Caco-2 (cell line): ENCODE measurements at regions of chr17 and their contacts with region 1.

Region 1: DNA sequence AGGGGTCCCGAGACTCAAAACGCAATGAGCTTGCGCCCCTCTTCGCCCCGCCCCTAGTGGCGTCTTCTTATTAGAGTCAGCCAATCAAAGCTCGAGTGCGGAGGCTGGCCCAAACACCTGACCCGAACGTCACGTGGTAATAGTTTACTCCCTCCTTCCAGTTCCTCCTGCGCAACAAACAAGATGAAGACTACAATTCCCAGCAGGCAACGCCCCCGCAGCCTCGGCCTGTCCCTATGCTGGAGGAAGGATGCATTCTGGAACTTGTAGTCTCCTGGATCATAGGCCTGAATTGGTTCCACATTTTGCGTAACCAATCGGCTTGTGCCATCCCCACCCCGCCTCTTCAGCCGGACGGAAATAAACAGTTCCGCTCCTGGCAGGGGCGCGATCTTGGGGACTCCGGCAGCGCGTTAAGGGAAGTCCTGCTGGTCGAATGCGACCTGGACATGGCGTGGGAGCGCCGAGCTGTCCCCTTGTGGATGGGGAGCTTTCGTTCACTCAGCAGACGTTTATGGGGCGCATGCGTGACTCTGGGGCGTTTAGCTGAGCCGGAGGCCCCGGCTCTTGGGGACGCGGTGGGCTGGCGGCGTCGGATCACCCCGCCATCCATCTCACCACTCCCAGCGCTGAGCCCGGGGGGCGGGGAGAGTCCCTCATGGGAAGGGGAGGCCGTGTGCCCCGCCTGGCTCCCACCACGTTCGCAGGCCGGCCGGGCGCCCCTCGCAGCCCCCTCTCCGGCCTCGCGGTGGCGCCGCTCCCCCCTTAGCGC is at the start of gene WBP2:
- DNase-seq: peak; percentile 98 to 99
- H3K4me3 ChIP-seq: peak within 1 kb of the TSS; percentile 85
- H3K4me3 Mint-ChIP-seq: no peak within 1 kb of the TSS
- H3K27ac Mint-ChIP-seq: no peak within 1 kb of the TSS
- H3K4me1 ChIP-seq: peaks cover 6% of the 10 kb centered on the region
- H3K4me1 Mint-ChIP-seq: peaks cover 12% of the 10 kb centered on the region
- H3K27me3 ChIP-seq: no peaks in the 10 kb centered on the region
- H3K27me3 Mint-ChIP-seq: no peaks in the 10 kb centered on the region
- CTCF ChIP-seq: peak; percentile 11 to 20
- total RNA-seq, gene WBP2: 66.6 and 72.3 TPM in 2 replicates

Region 2: DNA sequence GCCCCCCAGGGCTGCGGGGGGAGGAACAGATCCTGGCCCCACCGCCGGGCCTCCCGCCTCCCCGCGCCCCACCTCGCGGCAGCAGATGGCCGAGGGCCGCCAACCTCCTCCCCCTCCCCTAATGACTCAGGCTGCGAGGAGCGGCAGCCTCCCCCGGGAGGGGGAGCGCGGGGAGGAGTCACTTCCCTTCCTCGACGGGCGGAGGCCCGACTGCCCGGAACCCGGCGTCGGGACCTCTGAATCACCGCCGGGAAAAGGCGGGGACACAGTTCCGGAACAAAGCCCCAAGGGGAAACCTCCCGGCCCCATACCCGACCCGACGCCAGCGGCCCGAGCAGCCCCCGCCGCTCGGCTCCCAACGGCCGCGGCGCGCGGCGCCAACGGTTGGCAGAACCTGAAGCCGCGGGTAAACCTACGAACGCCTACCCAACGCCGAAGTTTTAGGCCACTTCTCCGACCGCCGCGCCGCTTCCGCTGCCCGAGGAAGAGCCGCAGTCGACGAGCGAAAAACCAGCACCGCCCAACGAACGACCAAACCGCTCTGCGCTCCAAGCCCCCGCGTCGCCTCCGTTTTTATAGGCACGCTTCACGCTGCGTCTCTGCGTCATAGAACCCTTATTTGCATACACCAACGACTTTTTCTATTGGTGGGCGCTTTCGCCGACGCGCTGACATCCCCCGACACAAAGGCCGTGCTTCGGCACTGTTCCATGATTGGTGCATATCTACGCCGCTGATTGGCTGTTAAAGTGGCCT is 76.1 kb before region 1 on chr17:
- CTCF ChIA-PET with region 1: interaction called, 8 read pairs
- POLR2A ChIA-PET with region 1: interaction called, 37 read pairs
- intact Hi-C with region 1: loop called (anchors 1 kb)
- DNase-seq: peak; percentile 97 to 99
- H3K4me3 ChIP-seq: peak overlapping the region; percentile 85
- H3K4me3 Mint-ChIP-seq: peak overlapping the region; percentile 100
- H3K27ac Mint-ChIP-seq: peak overlapping the region; percentile 100
- H3K4me1 ChIP-seq: peaks cover 21% of the 10 kb centered on the region
- H3K4me1 Mint-ChIP-seq: peaks cover 28% of the 10 kb centered on the region
- H3K27me3 ChIP-seq: no peaks in the 10 kb centered on the region
- H3K27me3 Mint-ChIP-seq: peaks cover 4% of the 10 kb centered on the region
- CTCF ChIP-seq: no peak

Region 3: DNA sequence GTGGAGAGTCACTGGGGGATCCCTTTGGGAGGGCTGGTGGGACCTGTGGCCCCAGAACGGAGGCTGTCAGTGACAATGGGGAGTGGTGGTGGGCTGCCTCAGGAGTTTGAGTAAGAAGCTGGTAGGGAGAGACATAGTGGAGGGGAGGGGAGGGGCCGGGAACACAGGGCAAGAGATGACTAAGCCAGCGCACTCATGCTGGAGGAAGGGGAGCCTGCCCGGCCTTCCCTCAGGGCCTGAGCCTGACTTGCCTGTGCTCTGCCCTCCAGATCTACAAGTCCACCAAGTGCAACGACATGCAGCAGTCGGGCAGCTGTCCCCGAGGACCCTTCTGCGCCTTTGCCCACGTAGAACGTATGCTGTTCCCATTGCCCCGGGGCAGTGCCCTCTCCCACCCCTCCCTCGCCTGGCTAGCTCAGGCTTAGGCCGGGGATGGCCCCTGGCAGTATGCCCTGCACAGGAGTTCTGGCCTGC is 40.6 kb before region 1 on chr17:
- CTCF ChIA-PET with region 1: no interaction called
- POLR2A ChIA-PET with region 1: interaction called, 10 read pairs
- intact Hi-C with region 1: no loop called
- DNase-seq: no peak
- H3K4me3 ChIP-seq: no peak overlapping the region
- H3K4me3 Mint-ChIP-seq: no peak overlapping the region
- H3K27ac Mint-ChIP-seq: no peak overlapping the region
- H3K4me1 ChIP-seq: no peaks in the 10 kb centered on the region
- H3K4me1 Mint-ChIP-seq: no peaks in the 10 kb centered on the region
- H3K27me3 ChIP-seq: no peaks in the 10 kb centered on the region
- H3K27me3 Mint-ChIP-seq: no peaks in the 10 kb centered on the region
- CTCF ChIP-seq: no peak

Region 4: DNA sequence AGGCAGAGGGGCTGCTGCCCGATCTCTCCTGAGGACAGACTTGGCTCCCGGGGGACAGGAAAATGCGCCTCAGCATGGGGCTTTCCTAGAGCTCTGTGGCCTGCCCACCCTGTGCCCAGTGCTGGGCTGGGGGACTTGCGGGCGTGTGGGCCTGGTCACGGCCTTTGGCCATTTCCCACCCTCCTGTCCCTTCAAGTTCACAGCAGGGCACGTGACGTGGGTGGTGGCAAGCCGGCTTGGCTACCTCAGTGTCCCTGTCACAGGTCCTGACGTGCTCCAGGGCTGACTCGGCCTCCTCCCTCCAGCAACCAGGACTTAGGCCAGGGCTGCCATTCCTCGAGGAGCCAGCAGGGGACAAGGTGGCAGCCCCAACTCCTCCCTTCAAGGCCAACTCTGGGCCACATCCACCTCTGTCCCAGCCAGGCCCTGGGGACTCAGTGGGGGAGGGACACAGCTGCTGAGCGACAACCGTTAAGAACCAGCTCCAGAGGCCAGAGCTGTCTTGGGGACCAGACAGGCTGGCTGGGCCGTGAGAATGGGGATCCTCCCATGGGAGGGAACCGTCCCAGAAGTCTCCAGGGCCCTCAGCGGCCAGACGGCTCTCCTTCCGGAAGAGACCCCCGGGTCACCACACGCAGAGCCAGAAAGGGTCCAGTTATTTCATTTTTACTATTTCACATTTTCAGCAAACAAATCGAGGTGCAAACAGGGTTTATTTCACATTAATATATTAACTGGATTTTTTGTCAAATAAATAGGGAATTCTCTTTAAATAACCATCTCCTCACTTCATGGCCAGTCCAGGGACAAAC is 10.2 kb before region 1 on chr17:
- CTCF ChIA-PET with region 1: interaction called, 34 read pairs
- POLR2A ChIA-PET with region 1: interaction called, 30 read pairs
- intact Hi-C with region 1: loop called (anchors 1 kb)
- DNase-seq: peak; percentile 85 to 89
- H3K4me3 ChIP-seq: no peak overlapping the region
- H3K4me3 Mint-ChIP-seq: peak overlapping the region; percentile 54
- H3K27ac Mint-ChIP-seq: peak overlapping the region; percentile 93
- H3K4me1 ChIP-seq: peaks cover 41% of the 10 kb centered on the region
- H3K4me1 Mint-ChIP-seq: peaks cover 26% of the 10 kb centered on the region
- H3K27me3 ChIP-seq: no peaks in the 10 kb centered on the region
- H3K27me3 Mint-ChIP-seq: no peaks in the 10 kb centered on the region
- CTCF ChIP-seq: peak; percentile 72 to 86

Region 5: DNA sequence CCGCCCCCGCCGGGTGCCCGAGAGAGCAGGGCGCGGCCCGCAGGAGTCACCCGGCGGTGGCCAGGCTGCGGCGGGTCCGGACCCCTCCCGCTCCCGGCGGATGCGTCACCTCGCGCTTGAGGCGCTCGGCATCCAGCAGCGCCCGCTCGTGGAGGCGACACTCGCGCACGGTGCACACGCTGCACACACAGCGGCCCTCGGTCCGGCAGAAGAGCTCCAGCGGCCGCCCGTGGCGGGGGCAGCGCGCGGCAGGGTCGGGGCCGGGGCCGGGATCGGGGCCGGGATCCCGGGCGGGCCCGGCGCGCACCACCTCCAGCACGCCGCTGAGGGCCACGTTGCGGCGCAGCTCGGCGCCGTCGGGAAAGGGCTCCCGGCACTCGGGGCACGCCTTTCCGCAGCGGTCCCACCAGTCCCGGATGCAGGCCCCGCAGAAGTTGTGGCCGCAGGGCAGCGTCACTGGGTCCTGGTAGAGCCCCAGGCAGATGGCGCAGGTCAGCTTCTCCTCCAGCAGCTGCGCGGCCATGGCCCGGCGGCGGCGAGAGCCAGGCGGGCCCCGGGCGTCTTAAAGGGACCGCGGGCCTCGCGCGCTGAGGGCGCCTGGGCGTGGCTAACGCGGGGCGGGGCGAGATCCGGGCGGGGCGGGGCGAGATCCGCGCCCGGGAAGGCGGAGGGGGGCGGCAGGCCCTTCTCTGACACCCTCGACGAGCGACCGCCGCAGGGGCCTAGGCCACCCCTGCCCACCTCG is 41.1 kb after region 1 on chr17 and contains the start of gene TRIM65:
- CTCF ChIA-PET with region 1: interaction called, 25 read pairs
- POLR2A ChIA-PET with region 1: interaction called, 9 read pairs
- intact Hi-C with region 1: no loop called
- DNase-seq: peak; percentile 80 to 87
- H3K4me3 ChIP-seq: peak within 1 kb of the TSS; percentile 88
- H3K4me3 Mint-ChIP-seq: peak within 1 kb of the TSS; percentile 72
- H3K27ac Mint-ChIP-seq: peak within 1 kb of the TSS; percentile 94
- H3K4me1 ChIP-seq: peaks cover 21% of the 10 kb centered on the region
- H3K4me1 Mint-ChIP-seq: peaks cover 19% of the 10 kb centered on the region
- H3K27me3 ChIP-seq: no peaks in the 10 kb centered on the region
- H3K27me3 Mint-ChIP-seq: no peaks in the 10 kb centered on the region
- CTCF ChIP-seq: peak in 1 of 2 experiments; percentile 36
- total RNA-seq, gene TRIM65: 23.1 and 25.2 TPM in 2 replicates

Region 6: GRCh38 chr17:76079535-76079955 is 224.0 kb after region 1 on chr17:
- CTCF ChIA-PET with region 1: interaction called, 12 read pairs
- POLR2A ChIA-PET with region 1: no interaction called
- intact Hi-C with region 1: no loop called
- DNase-seq: no peak
- H3K4me3 ChIP-seq: no peak overlapping the region
- H3K4me3 Mint-ChIP-seq: no peak overlapping the region
- H3K27ac Mint-ChIP-seq: no peak overlapping the region
- H3K4me1 ChIP-seq: no peaks in the 10 kb centered on the region
- H3K4me1 Mint-ChIP-seq: peaks cover 9% of the 10 kb centered on the region
- H3K27me3 ChIP-seq: no peaks in the 10 kb centered on the region; the same call in none of the 2 replicates
- H3K27me3 Mint-ChIP-seq: peaks cover 21% of the 10 kb centered on the region
- CTCF ChIP-seq: no peak